Tibial artery (tissue), 4 donors: ENCODE measurements at regions of chr9 and their contacts with region 1.

Region 1: GRCh38 chr9:20788526-20789451 is 104.7 kb downstream of the FOCAD start:
- DNase-seq: no peak
- H3K4me3 ChIP-seq: no peak overlapping the region
- H3K27ac ChIP-seq: no peak overlapping the region
- H3K4me1 ChIP-seq: no peaks in the 10 kb centered on the region
- H3K27me3 ChIP-seq: no peaks in the 10 kb centered on the region
- CTCF ChIP-seq: no peak

Region 2: GRCh38 chr9:20728493-20729220 is 60.1 kb before region 1 on chr9:
- intact Hi-C with region 1: loop called (anchors 10 kb)
- DNase-seq: no peak
- H3K4me3 ChIP-seq: no peak overlapping the region
- H3K27ac ChIP-seq: no peak overlapping the region
- H3K4me1 ChIP-seq: no peaks in the 10 kb centered on the region
- H3K27me3 ChIP-seq: no peaks in the 10 kb centered on the region
- CTCF ChIP-seq: no peak